Right cardiac atrium (tissue), 5 donors: ENCODE measurements at regions of chr18 and their contacts with region 1.

Region 1: GRCh38 chr18:62596145-62597005 is 73.5 kb downstream of the ZCCHC2 start:
- DNase-seq: peak in 1 of 3 donors; percentile 61
- ATAC-seq: peak; percentile 43 to 70
- H3K4me3 ChIP-seq: peak overlapping the region; percentile 42
- H3K27ac ChIP-seq: no peak overlapping the region
- H3K4me1 ChIP-seq: no peaks in the 10 kb centered on the region
- H3K27me3 ChIP-seq: no peaks in the 10 kb centered on the region

Region 2: DNA sequence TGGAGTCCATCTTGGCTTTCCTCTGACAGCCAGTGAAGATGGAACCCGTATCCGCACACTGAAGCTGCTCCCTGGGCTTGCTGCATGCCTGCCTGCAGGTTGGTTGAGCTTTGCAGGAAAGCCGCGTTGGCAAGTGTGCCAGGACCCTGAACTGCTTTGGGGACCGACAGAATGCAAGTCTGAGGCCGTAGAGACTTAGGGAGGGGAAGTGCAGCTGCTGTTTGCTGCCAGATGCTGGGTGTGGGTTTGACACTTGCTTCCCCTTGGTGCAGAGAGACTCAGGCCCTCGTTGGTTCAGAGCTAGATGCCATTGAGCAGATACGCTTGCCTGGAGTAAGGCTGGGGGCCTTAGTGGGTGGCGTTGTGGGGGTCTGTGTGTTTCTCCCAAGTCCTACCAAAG is 105.9 kb after region 1 on chr18:
- intact Hi-C with region 1: loop called in 1 of 4 experiments (anchors 10 kb)
- DNase-seq: no peak
- ATAC-seq: no peak
- H3K4me3 ChIP-seq: no peak overlapping the region
- H3K27ac ChIP-seq: no peak overlapping the region
- H3K4me1 ChIP-seq: no peaks in the 10 kb centered on the region
- H3K27me3 ChIP-seq: no peaks in the 10 kb centered on the region